MCF 10A (cell line): ENCODE measurements at regions of chr2 and their contacts with region 1.

Region 1: DNA sequence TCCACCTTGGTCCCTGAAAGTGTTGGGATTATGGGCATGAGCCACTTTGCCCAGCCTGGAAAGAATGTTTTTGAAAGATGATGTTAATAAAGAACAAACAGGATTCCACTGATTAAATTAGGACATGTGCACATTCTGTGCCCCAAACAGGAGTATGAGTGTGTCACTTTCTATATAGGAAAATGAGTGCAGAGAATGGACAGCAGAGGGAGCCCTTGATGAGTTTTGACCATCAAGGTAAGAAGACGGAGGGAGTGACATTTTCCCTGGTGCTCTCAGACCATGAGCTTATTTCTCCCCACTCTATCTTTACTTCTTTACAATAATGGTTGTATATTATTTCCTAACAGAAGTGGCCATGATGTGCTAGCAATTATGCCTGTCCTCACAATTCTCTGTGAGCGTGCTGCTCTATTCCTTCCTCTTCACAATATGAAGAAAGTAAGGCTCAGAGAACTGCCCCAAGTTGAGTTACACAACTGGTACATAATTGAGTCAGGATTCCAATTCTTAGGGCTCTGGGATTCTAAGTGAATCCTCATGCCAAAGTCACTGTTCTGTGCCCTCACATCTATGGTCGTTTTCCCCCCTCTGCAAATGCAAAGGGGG is 20.6 kb downstream of the RPL37A start:
- DNase-seq: peak; percentile 82
- H3K4me3 Mint-ChIP-seq: no peak overlapping the region
- H3K27ac Mint-ChIP-seq: no peak overlapping the region
- H3K4me1 Mint-ChIP-seq: peaks cover 6% of the 10 kb centered on the region
- H3K27me3 Mint-ChIP-seq: no peaks in the 10 kb centered on the region
- CTCF ChIP-seq: peak; percentile 62

Region 2: GRCh38 chr2:216371756-216372702 is 147.2 kb before region 1 on chr2 and contains the start of gene MARCHF4:
- CTCF ChIA-PET with region 1: no interaction called
- POLR2A ChIA-PET with region 1: no interaction called
- intact Hi-C with region 1: no loop called
- DNase-seq: peak; percentile 60
- H3K4me3 Mint-ChIP-seq: peak within 1 kb of the TSS; percentile 49
- H3K27ac Mint-ChIP-seq: no peak within 1 kb of the TSS
- H3K4me1 Mint-ChIP-seq: peaks cover 26% of the 10 kb centered on the region
- H3K27me3 Mint-ChIP-seq: peaks cover 45% of the 10 kb centered on the region
- CTCF ChIP-seq: no peak
- total RNA-seq, gene MARCHF4: 0.17 and 0.33 TPM in 2 replicates

Region 3: DNA sequence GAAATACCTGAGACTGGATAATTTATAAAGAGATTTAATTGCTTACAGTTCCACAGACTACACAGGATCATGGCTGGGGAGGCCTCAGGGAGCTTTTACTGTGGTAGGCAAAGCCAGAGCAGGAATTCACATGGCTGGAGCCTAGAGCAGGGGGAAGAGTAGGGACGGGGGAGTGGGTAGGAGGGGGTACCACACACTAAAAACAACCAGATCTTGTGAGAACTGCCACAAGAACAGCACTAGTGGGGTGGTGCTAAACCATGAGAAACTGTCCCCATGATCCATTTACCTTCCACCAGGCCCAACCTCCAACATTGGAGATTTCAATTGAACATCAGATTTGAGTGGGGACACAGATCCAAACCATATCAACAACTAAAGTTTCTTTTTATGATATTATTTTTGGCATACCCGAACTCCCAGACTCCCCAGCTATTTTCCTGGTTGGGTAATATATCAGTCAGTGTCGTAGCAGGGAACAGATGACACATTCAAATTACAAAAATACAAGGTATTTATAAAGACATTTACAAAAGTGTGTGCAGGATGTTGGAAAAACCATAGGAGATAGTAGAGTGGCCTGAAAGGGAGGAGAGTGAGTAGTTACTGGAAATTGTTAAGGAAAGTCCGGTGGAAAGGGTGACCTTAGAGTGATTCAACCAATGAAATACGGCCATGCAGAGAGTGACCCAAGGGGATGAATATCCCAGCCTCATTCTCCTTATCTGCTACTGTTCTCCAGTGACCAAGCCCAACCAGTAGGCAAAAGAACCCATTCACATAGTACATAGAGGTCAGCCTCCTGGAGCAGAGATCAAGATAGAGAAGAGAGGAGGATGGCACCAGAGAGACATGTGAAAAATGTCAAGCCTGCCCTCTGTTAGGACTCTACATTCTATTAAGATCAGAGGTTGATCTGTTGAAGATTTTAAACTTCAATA is 11.8 kb before region 1 on chr2:
- CTCF ChIA-PET with region 1: interaction called, 10 read pairs
- POLR2A ChIA-PET with region 1: interaction called, 5 read pairs
- intact Hi-C with region 1: no loop called
- DNase-seq: no peak
- H3K4me3 Mint-ChIP-seq: no peak overlapping the region
- H3K27ac Mint-ChIP-seq: peak overlapping the region; percentile 56
- H3K4me1 Mint-ChIP-seq: peaks cover 18% of the 10 kb centered on the region
- H3K27me3 Mint-ChIP-seq: no peaks in the 10 kb centered on the region
- CTCF ChIP-seq: no peak

Region 4: DNA sequence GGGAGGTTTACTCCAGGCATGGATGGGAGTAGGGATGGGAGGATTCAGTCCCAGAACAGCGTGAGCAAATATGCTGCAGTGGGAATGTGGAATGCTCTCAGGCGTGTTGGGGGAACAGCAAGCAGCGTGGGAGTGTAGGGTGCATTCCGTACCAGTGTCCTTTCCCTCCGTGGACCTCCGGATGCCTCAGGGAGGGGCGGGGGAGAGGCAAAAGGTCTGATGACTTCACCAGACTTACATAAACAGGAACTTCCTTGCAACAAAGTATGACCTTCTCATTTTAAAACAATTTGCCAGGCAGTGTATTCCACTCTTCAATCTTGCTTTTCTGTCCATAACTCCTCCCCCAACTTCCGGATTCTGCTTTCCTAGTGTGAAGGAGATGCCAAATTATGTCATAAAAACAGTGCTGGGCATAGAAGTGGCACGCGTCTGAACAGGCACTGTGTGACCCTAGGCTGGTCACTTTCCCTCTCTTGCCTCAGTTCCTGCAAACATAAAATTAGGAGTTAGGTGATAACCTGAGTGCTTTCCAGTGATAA is 16.3 kb after region 1 on chr2:
- CTCF ChIA-PET with region 1: interaction called, 21 read pairs
- POLR2A ChIA-PET with region 1: interaction called, 4 read pairs
- intact Hi-C with region 1: no loop called
- DNase-seq: peak; percentile 73
- H3K4me3 Mint-ChIP-seq: no peak overlapping the region
- H3K27ac Mint-ChIP-seq: no peak overlapping the region
- H3K4me1 Mint-ChIP-seq: peaks cover 45% of the 10 kb centered on the region
- H3K27me3 Mint-ChIP-seq: no peaks in the 10 kb centered on the region
- CTCF ChIP-seq: no peak

Region 5: GRCh38 chr2:216546641-216547403 is 27.6 kb after region 1 on chr2:
- CTCF ChIA-PET with region 1: interaction called, 21 read pairs
- POLR2A ChIA-PET with region 1: no interaction called
- intact Hi-C with region 1: no loop called
- DNase-seq: no peak
- H3K4me3 Mint-ChIP-seq: no peak overlapping the region
- H3K27ac Mint-ChIP-seq: peak overlapping the region; percentile 7
- H3K4me1 Mint-ChIP-seq: peaks cover 43% of the 10 kb centered on the region
- H3K27me3 Mint-ChIP-seq: no peaks in the 10 kb centered on the region
- CTCF ChIP-seq: no peak

Region 6: GRCh38 chr2:216673609-216674008 is 154.4 kb after region 1 on chr2:
- CTCF ChIA-PET with region 1: interaction called, 673 read pairs
- POLR2A ChIA-PET with region 1: interaction called, 3 read pairs
- intact Hi-C with region 1: no loop called
- DNase-seq: no peak
- H3K4me3 Mint-ChIP-seq: no peak overlapping the region
- H3K27ac Mint-ChIP-seq: no peak overlapping the region
- H3K4me1 Mint-ChIP-seq: peaks cover 5% of the 10 kb centered on the region
- H3K27me3 Mint-ChIP-seq: peaks cover 42% of the 10 kb centered on the region
- CTCF ChIP-seq: no peak

Region 7: GRCh38 chr2:216683846-216684507 is 164.7 kb after region 1 on chr2:
- CTCF ChIA-PET with region 1: interaction called, 15 read pairs
- POLR2A ChIA-PET with region 1: interaction called, 3 read pairs
- intact Hi-C with region 1: loop called (anchors 5 kb)
- DNase-seq: peak; percentile 99
- H3K4me3 Mint-ChIP-seq: no peak overlapping the region
- H3K27ac Mint-ChIP-seq: peak overlapping the region; percentile 93
- H3K4me1 Mint-ChIP-seq: peaks cover 32% of the 10 kb centered on the region
- H3K27me3 Mint-ChIP-seq: no peaks in the 10 kb centered on the region
- CTCF ChIP-seq: no peak